ENCODE measurements at regions of chr4 and their contacts with region 1.

Region 1: DNA sequence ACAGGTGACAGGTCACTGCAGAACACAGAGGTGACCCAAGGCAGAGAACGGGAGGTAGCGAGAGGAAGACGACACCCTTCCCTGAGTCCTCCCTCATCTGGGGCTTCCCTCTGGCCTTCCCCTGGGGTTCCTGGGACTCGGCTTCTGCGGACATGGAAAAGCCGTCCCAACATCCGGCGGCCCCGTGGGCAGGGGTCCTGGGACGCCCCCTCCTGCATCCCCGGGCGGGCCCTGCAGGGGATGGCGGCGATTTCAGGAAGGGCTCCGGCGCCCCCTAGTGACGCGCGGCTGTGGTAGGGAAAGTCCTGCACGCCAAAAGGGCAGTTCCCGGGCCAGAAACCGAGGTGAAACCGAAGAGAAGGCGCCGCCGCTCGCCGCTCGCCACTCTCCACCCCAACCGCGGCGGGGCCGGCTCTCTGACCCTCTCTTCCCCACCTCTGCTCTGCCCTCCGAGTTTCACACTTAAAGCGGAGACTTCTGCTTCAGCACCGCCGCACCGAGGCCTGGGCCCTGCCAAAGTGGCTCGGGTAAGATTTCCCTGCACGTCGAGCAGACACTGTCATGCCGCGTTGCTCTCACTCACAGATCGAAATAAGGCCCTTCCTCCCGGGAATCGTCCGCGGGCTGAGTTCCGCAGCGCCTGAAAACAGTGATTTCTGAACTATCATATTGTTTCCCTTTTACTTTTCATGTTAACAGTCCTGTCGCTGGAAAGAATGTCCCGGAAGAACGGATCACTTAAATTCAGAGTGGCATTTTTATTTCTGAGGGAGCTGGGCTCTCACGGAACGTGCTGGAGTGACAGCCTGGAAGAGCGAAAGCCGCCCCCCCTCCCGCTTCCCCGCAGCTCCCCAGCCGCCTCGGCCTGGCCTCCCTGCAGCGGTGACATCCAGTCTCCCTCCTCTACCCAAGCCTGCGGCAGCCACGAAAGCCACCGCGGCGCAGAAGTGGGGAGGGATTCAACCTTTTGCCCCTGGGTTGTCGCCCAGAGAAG is 110.6 kb downstream of the DCTD start:
- DNase-seq: peak; percentile 66
- ATAC-seq: peak; percentile 64
- H3K4me3 ChIP-seq: peak overlapping the region; percentile 55
- H3K27ac ChIP-seq: no peak overlapping the region
- H3K4me1 ChIP-seq: peaks cover 13% of the 10 kb centered on the region
- H3K27me3 ChIP-seq: no peaks in the 10 kb centered on the region
- CTCF ChIP-seq: peak; percentile 81

Region 2: GRCh38 chr4:182478475-182478874 is 328.1 kb before region 1 on chr4:
- CTCF ChIA-PET with region 1: no interaction called
- POLR2A ChIA-PET with region 1: no interaction called
- intact Hi-C with region 1: loop called (anchors 1 kb)
- DNase-seq: peak; percentile 68
- ATAC-seq: peak; percentile 50
- H3K4me3 ChIP-seq: no peak overlapping the region
- H3K27ac ChIP-seq: no peak overlapping the region
- H3K4me1 ChIP-seq: no peaks in the 10 kb centered on the region
- H3K27me3 ChIP-seq: no peaks in the 10 kb centered on the region
- CTCF ChIP-seq: peak; percentile 58

Region 3: DNA sequence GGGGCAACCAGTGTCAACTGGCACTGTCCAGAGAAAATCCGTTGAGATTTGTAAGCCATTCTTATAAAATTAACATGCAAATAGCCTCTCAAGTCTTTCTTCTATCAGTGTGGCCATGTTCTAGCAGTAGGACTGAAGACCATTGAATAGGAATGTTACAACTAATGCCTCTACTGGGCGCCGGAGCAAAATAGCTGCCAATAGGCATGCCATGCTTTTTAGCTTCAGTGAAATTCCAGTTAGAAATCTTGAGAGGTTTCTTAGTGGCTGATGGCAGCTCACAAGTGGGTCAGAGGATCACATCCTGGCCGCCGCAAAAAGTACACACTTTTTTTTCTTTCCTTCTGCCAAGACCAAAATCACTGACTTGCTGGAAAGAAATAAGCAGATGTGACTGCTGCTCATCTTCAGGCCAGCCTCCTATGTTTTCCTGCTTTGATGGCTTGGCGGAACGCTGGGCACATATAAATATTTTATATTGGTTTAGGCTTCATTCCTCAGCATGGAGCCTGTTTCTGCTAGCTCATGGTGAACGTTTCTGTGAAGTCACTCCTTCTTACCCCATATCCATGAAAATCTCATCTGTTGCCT is 270.2 kb before region 1 on chr4:
- CTCF ChIA-PET with region 1: no interaction called
- POLR2A ChIA-PET with region 1: no interaction called
- intact Hi-C with region 1: loop called (anchors 5 kb)
- DNase-seq: no peak
- ATAC-seq: no peak
- H3K4me3 ChIP-seq: no peak overlapping the region
- H3K27ac ChIP-seq: no peak overlapping the region
- H3K4me1 ChIP-seq: no peaks in the 10 kb centered on the region
- H3K27me3 ChIP-seq: no peaks in the 10 kb centered on the region
- CTCF ChIP-seq: no peak

Region 4: DNA sequence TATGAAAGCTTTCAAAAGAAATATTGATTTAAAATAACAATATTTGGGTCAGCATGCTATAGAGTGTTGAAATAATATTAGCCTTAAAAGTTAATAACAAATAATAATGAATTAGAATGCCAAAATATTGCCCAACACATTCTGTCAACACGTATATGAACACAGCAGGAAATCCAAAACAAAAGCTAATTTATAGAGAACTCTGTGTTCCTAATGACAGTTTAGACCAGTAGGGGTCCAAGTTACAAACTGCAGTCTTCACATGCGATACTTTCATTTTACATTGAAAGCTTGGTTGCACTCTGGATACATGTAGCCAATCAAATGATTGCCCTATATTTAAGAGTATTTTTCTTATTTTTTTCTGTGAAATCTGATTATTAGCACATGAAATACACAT is 163.7 kb before region 1 on chr4:
- CTCF ChIA-PET with region 1: no interaction called
- POLR2A ChIA-PET with region 1: no interaction called
- intact Hi-C with region 1: loop called (anchors 10 kb)
- DNase-seq: peak; percentile 21
- ATAC-seq: no peak
- H3K4me3 ChIP-seq: no peak overlapping the region
- H3K27ac ChIP-seq: no peak overlapping the region
- H3K4me1 ChIP-seq: no peaks in the 10 kb centered on the region
- H3K27me3 ChIP-seq: no peaks in the 10 kb centered on the region
- CTCF ChIP-seq: peak; percentile 37; the same call in 1 of the 2 replicates

Region 5: DNA sequence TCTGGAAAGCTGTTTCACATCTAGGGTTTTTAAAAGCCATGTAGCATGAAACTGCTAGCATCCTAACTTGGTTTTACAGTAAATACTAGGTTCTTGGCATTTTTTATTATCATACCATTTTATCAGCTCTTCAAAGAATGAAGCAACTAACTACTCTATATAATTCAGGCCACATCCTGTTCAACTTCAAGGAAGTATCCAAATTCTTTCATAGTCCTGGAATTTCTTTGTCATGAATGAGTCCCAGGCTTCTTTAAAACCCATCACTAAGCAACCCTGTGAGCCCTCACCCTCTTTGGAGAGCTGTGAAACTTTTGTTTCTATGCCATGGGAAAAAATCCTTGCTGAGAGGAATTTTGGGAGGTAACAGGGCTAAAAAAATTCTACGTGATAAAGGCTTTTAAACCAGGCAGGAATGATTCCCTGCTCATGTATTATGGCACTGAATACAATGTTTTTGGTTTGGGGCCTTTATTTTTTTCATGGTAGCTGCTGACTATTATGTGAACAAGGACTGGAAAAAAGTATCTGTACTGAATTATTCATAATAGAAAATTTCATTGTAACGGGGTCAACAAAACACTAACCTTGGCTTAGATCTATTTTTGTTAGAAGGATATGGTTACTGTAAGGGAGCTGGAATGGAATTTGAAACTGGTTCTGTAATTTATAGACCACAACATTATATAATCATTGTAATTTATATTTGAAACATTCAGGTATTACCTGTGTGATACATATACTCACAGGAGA is 54.2 kb before region 1 on chr4:
- CTCF ChIA-PET with region 1: no interaction called
- POLR2A ChIA-PET with region 1: interaction called, 25 read pairs
- intact Hi-C with region 1: loop called (anchors 2 kb)
- DNase-seq: peak; percentile 78
- ATAC-seq: peak; percentile 68
- H3K4me3 ChIP-seq: no peak overlapping the region
- H3K27ac ChIP-seq: peak overlapping the region; percentile 77
- H3K4me1 ChIP-seq: peaks cover 63% of the 10 kb centered on the region
- H3K27me3 ChIP-seq: no peaks in the 10 kb centered on the region
- CTCF ChIP-seq: no peak

Region 6: DNA sequence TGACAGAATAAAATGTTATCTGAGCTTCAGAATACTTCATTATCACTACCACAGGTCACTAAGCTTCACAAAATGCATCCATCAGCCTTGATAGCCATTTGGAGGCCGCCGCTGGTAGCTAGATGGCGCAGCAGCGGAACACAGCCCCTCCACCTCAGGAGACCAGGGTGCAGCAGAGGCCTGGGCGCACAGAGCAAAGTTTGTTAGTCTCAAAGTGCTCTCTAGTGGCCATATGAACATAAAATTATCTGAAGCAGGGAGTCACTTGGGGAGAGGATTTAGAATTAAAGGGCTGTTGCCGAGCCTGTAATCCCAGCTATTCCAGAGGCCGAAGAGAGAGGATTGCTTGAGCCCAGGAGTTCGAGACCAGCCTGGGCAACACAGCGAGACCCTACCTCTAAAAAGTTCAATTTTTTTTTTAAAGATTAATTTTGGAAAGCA is 118.8 kb after region 1 on chr4:
- CTCF ChIA-PET with region 1: no interaction called
- POLR2A ChIA-PET with region 1: no interaction called
- intact Hi-C with region 1: loop called (anchors 10 kb)
- DNase-seq: peak; percentile 77
- ATAC-seq: peak; percentile 99
- H3K4me3 ChIP-seq: no peak overlapping the region
- H3K27ac ChIP-seq: no peak overlapping the region
- H3K4me1 ChIP-seq: no peaks in the 10 kb centered on the region; the same call in 1 of the 2 replicates
- H3K27me3 ChIP-seq: no peaks in the 10 kb centered on the region
- CTCF ChIP-seq: peak; percentile 80